Common myeloid progenitor, CD34-positive (primary cell): ENCODE measurements at regions of chr9 and their contacts with region 1.

Region 1: DNA sequence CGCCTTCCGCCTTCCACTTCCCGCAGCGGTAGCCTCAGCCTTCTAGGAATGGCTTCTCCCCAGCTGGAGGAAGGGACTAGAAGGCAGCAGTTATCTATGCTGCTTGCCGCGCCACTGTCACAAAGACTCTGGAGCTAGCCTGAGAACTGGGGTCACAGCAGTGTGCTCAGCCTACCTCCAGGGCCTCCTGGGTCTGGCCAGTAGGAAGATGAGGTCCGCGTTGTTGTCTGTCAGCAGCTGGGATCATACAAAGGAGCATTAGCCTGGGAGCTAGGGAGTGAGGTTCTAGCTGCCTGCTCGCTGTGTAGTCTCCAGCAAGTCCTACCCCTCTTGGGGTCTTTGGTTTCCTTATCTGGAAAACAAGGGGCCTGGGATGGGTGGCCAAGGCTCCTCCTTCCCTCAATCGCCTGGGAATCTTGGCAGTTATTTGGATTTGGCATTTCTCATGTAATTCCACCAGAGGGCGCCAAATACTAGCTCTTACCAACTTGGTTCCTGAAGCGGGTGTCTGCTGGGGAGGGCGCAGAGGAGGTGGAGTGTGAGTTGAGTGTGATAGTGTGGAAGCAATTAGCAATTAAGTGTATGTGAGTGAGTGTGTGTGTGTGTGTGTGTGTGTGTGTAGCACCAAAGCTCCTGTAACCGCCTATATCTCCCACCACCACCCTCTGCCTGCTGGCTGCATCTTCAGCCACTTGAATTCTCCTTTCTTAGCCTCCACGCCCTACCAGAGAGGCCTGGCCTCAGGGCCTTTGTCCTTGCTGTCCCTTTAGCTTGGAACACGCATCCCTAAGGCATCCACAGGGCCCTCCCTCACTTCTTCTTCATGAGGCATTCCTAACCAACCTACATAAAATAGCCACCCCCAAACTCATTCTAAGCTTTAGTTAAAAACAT is 97.1 kb downstream of the ENTREP1 start:
- DNase-seq: peak; percentile 52 to 77 (median 69)
- H3K4me3 ChIP-seq: no peak overlapping the region
- H3K27ac ChIP-seq: no peak overlapping the region
- H3K4me1 ChIP-seq: no peaks in the 10 kb centered on the region
- H3K27me3 ChIP-seq: peaks cover 0 to 2% (median 0%) of the 10 kb centered on the region in 5 experiments

Region 2: GRCh38 chr9:69549310-69550202 is 127.4 kb after region 1 on chr9:
- CTCF ChIA-PET with region 1: interaction called, 64 read pairs
- POLR2A ChIA-PET with region 1: no interaction called
- DNase-seq: peak; percentile 47 to 70 (median 67)
- H3K4me3 ChIP-seq: no peak overlapping the region
- H3K27ac ChIP-seq: no peak overlapping the region
- H3K4me1 ChIP-seq: no peaks in the 10 kb centered on the region
- H3K27me3 ChIP-seq: no peaks in the 10 kb centered on the region

Region 3: GRCh38 chr9:69919461-69920061 is 497.4 kb after region 1 on chr9:
- CTCF ChIA-PET with region 1: interaction called, 31 read pairs
- POLR2A ChIA-PET with region 1: no interaction called
- DNase-seq: peak; percentile 47 to 80 (median 78)
- H3K4me3 ChIP-seq: no peak overlapping the region
- H3K27ac ChIP-seq: no peak overlapping the region
- H3K4me1 ChIP-seq: no peaks in the 10 kb centered on the region
- H3K27me3 ChIP-seq: peaks cover 0 to 13% (median 3%) of the 10 kb centered on the region in 5 experiments